Tibial artery (tissue), 4 donors: ENCODE measurements at regions of chr21 and their contacts with region 1.

Region 1: DNA sequence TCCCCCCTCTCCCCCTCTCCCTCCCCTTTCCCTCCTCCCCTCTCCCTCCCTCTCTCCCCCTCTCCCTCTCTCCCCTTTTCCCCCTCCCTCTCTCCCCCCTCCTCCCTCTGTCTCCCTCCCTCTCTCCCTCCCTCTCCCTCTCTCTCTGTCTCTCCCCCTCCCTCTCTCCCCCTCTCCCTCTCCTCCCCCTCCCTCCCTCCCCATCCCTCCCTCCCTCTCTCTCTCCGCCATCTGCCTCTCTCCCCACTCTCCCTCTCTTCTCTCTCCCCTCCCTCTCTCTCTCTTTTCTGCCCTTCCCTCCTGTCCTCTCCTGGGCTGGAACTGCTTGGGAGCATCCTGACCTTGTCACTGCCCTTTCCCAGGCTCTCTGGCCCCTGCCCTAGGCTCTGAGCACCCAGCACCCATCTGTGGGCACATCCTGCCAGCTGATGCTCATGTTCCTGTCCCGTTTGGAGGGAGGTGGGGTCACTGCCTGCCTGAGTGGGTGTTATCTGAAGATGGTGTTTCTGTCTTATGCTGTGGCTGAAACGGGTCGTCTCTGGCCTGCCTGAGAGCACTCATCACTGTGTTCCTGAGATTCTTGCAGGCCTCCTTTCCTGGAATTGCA is 10.8 kb downstream of the FTCD start:
- DNase-seq: no peak
- H3K4me3 ChIP-seq: no peak overlapping the region
- H3K27ac ChIP-seq: no peak overlapping the region
- H3K4me1 ChIP-seq: peaks cover 0 to 10% (median 4%) of the 10 kb centered on the region in 4 donors
- H3K27me3 ChIP-seq: no peaks in the 10 kb centered on the region
- CTCF ChIP-seq: no peak

Region 2: GRCh38 chr21:46191257-46191685 is 46.7 kb after region 1 on chr21:
- intact Hi-C with region 1: loop called (anchors 10 kb)
- DNase-seq: peak; percentile 69 to 79
- H3K4me3 ChIP-seq: no peak overlapping the region
- H3K27ac ChIP-seq: no peak overlapping the region
- H3K4me1 ChIP-seq: peaks cover 0 to 11% (median 0%) of the 10 kb centered on the region in 4 donors
- H3K27me3 ChIP-seq: no peaks in the 10 kb centered on the region
- CTCF ChIP-seq: no peak

Region 3: DNA sequence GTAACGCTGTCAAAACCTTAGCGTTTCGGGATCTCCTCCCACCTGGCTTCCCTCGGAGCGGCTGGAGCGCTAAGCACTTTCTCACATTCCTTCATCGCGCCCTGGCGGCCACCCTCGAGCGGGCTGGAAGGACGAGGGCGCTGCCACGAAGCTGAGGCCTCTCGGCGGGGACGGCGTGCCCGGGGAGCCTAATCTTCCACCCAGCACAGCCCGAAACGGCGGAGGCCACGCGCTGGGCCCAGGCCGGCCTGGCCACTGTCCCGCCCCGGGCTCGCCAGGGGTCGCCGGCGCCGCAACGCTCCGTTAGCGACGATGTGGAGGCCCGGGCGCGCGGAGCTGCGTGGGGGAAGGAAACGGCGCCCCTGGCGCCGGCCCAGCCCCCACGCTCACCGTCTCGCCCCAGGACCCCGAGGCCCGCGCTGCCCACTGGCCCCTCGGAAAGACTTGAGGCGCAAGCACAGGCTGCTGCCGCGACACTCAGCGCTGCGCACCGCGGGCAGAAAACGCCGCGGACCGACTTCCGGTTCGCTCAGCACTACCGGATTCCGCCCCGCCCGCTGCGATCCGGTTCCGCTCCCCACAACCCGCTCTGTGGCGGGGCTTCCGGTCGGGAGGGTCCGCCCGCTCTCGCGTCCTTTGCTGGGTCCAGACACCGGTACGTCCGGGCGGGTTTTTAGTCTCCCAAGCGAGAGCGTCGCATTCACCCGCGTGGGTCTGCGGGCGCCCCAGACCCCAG is 141.4 kb after region 1 on chr21 and contains the start of gene YBEY:
- intact Hi-C with region 1: loop called (anchors 10 kb)
- DNase-seq: peak; percentile 81 to 93
- H3K4me3 ChIP-seq: peak within 1 kb of the TSS; percentile 77 to 79
- H3K27ac ChIP-seq: peak within 1 kb of the TSS; percentile 90 to 96
- H3K4me1 ChIP-seq: peaks cover 0 to 54% (median 40%) of the 10 kb centered on the region in 4 donors
- H3K27me3 ChIP-seq: no peaks in the 10 kb centered on the region
- CTCF ChIP-seq: peak; percentile 40